Caco-2 (cell line): ENCODE measurements at regions of chr6 and their contacts with region 1.

Region 1: DNA sequence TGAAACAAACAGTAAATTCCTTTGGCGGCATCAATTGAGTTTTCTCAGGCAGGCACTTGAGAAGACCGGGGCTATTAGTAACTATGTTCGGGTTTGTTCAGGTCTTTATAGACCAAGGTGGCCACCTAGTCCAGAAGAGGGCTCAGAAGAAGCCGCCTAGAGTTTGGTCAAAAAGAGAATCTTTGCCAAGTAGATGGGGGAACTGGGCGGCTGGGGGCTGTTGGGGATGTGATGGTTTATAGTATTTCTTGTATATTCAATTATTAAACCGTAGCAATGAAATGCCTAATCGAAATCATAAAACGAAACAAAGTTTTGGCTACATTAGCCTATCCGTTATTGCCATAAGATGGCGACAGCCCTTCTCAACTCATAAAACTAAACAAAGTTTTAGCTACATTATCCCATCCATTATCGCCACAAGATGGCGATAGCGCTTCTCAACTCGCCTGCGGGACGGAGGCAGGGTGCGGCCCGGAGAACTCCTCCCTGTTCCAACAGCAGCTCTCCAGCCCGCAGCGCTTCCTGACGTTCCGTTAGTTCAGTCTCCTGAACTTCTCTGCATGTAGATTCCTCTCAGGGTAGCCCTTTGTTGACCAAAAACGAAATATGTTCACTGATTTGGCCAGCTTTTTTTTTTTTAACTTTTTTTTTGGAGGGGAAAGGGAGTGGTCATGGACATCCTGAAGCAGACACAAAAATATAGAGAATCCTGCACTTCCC is 120.5 kb upstream of the PRSS16 start:
- DNase-seq: peak; percentile 84 to 88
- H3K4me3 ChIP-seq: peak overlapping the region; percentile 22; the same call in 1 of the 2 replicates
- H3K4me3 Mint-ChIP-seq: peak overlapping the region; percentile 71
- H3K27ac Mint-ChIP-seq: no peak overlapping the region
- H3K4me1 ChIP-seq: no peaks in the 10 kb centered on the region
- H3K4me1 Mint-ChIP-seq: no peaks in the 10 kb centered on the region
- H3K27me3 ChIP-seq: no peaks in the 10 kb centered on the region
- H3K27me3 Mint-ChIP-seq: no peaks in the 10 kb centered on the region
- CTCF ChIP-seq: peak; percentile 75 to 80

Region 2: GRCh38 chr6:27096834-27097511 is 30.0 kb before region 1 on chr6:
- CTCF ChIA-PET with region 1: no interaction called
- POLR2A ChIA-PET with region 1: no interaction called
- intact Hi-C with region 1: loop called (anchors 2 kb)
- DNase-seq: peak; percentile 78 to 81
- H3K4me3 ChIP-seq: peak overlapping the region; percentile 27
- H3K4me3 Mint-ChIP-seq: peak overlapping the region; percentile 74
- H3K27ac Mint-ChIP-seq: peak overlapping the region; percentile 94
- H3K4me1 ChIP-seq: no peaks in the 10 kb centered on the region
- H3K4me1 Mint-ChIP-seq: peaks cover 7% of the 10 kb centered on the region
- H3K27me3 ChIP-seq: no peaks in the 10 kb centered on the region
- H3K27me3 Mint-ChIP-seq: no peaks in the 10 kb centered on the region
- CTCF ChIP-seq: no peak

Region 3: GRCh38 chr6:27157459-27158315 is 30.7 kb after region 1 on chr6:
- CTCF ChIA-PET with region 1: interaction called, 7 read pairs
- POLR2A ChIA-PET with region 1: no interaction called
- intact Hi-C with region 1: loop called (anchors 1 kb)
- DNase-seq: peak; percentile 56 to 62
- H3K4me3 ChIP-seq: peak overlapping the region; percentile 46
- H3K4me3 Mint-ChIP-seq: peak overlapping the region; percentile 75
- H3K27ac Mint-ChIP-seq: peak overlapping the region; percentile 72
- H3K4me1 ChIP-seq: 0 out of 2 replicates have a peak, but pooled peaks cover 6% of the 10 kb centered on the region
- H3K4me1 Mint-ChIP-seq: peaks cover 24% of the 10 kb centered on the region
- H3K27me3 ChIP-seq: no peaks in the 10 kb centered on the region
- H3K27me3 Mint-ChIP-seq: no peaks in the 10 kb centered on the region
- CTCF ChIP-seq: peak in 1 of 2 experiments; percentile 42